Activated CD4-positive, alpha-beta memory T cell treated with anti-CD3 and anti-CD28 coated beads, Interleukin-2, amount 10 ng/mL, durations not matched to agents 7 days and 5 days (primary cell): ENCODE measurements at regions of chr1 and their contacts with region 1.

Region 1: DNA sequence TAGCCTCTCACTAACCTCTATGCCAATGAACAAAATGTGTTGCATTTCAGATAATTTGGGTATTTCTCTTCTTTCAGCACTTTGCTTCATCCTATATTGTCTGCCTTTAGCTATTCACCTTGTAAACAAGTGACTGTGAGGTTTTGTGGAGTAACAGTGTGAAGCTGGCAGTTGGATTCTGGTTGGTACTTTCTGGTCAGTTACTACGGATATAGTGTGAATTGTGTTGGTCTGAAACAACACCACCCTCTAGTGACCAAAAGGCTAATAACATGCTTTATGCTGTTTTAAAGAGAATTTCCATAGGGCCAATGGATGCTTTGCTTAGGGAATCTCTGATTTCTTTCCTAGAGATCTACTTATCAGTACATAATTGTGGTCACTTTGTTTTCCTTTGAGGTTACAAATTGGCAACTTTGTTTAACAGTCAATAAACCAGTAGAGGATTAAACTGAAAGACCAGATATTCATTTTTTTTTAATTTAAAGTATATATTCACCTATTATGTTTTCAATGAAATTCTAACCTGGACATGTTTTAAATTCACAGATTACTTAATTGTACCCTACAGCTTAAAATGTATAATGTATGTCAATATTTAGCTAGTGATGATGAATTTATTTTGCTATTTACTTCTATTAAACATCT is 2.5 kb upstream of the PTGER3 start:
- DNase-seq: no peak
- H3K4me3 Mint-ChIP-seq: no peak overlapping the region
- H3K27ac Mint-ChIP-seq: no peak overlapping the region
- H3K4me1 Mint-ChIP-seq: peaks cover 20% of the 10 kb centered on the region
- H3K27me3 Mint-ChIP-seq: peaks cover 45% of the 10 kb centered on the region

Region 2: DNA sequence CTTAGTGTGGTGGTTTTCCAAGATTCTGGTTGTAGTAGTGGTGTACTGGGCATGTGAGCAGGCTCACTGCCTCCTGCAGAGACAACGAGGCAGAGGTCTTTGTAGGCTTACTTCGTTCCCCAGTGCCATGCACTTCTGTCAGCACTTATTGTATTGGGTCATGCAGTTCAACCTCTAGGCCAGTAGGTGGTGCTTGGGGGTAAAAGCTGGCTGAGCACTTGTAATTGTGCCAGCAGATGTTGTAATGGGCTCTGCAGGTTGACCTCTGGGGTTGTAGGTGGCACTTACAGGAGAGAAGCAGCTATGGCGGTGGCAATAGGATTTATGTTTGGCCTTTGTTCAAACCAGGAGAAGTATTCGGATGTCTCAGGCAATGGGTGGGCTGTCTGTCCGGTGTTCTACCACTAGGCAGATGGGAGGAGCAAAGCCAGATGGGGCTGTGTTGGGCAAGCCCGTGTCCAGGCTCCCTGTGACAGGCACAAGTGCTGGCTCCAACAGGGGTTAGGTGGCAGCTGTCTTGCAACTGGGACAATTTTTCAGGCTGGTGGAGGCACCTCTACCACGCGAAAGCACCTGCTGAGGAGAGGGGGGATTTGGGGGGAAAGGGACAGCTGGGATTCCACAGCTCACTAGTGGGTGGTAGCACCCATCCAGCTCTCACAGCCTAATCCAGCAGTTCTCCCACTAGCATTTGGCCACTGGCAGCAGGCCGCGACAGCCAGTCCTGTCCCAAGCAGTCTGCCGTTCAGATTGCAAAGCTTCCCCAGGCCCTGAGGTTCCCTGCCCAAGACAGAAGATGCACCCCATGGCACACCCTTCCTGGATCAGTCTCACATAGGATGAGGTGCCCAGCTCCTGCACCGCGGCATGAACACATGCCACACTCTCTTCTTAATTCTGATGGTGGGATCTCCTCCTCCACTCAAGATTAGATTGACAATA is 364.5 kb before region 1 on chr1:
- CTCF ChIA-PET with region 1: interaction called, 14 read pairs
- POLR2A ChIA-PET with region 1: no interaction called
- DNase-seq: peak; percentile 54
- H3K4me3 Mint-ChIP-seq: no peak overlapping the region
- H3K27ac Mint-ChIP-seq: no peak overlapping the region
- H3K4me1 Mint-ChIP-seq: no peaks in the 10 kb centered on the region
- H3K27me3 Mint-ChIP-seq: peaks cover 6% of the 10 kb centered on the region